ENCODE measurements at regions of chr2 and their contacts with region 1.

Region 1: DNA sequence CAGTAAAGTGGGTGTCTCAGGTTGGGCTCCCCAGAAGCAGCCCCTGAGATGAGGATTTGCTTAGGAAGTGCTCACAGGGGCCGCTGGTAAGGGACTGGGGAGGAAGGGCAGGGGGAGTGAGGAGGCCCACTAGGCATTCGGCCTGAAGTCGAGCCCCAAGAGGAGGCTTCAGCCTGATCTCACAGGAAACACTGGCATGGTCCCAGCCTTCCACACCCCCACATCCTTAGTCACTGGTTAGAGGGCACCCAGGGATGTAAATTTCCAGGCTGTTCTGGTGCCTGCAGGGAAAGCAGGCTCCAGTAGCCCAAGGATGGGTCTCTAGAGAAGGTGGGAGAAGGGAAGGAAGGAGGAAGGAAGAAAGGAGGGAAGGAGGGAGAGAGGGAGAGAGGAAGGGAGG is 22.4 kb upstream of the KCNK3 start:
- DNase-seq: peak; percentile 44
- H3K4me3 ChIP-seq: no peak overlapping the region
- H3K27ac ChIP-seq: no peak overlapping the region
- H3K4me1 ChIP-seq: peaks cover 5% of the 10 kb centered on the region
- H3K27me3 ChIP-seq: no peaks in the 10 kb centered on the region
- CTCF ChIP-seq: no peak

Region 2: DNA sequence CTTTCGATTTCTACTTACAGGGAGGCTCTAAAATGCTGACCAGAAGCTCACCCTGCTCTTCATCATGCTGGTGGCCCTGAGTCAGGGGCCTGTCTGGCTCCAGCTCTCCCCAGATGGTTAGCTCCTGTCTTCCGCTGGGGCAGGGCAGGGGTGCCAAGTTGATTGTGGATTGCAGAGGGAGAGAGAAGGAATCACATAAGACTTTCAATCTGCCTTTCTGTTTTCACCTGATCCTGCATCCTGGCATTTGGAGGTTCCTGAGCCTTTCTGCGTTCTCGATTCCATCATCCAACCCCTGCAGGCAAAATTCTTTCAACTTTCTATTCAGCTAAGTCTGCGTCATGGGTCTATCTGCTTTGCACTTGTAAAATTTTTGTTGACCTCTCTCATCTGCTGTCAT is 33.2 kb before region 1 on chr2:
- CTCF ChIA-PET with region 1: no interaction called
- dilution Hi-C with region 1: loop called (anchors 5 kb)
- in situ Hi-C with region 1: no loop called
- intact Hi-C with region 1: no loop called
- DNase-seq: no peak
- H3K4me3 ChIP-seq: no peak overlapping the region
- H3K27ac ChIP-seq: no peak overlapping the region
- H3K4me1 ChIP-seq: peaks cover 16% of the 10 kb centered on the region
- H3K27me3 ChIP-seq: no peaks in the 10 kb centered on the region
- CTCF ChIP-seq: no peak